ENCODE measurements at regions of chr3 and their contacts with region 1.

Region 1: GRCh38 chr3:113514265-113514769 is 639 bp downstream of the SPICE1 start:
- DNase-seq: no peak
- H3K4me3 Mint-ChIP-seq: no peak overlapping the region
- H3K27ac Mint-ChIP-seq: no peak overlapping the region
- H3K4me1 Mint-ChIP-seq: peaks cover 7% of the 10 kb centered on the region
- H3K27me3 Mint-ChIP-seq: peaks cover 19% of the 10 kb centered on the region

Region 2: DNA sequence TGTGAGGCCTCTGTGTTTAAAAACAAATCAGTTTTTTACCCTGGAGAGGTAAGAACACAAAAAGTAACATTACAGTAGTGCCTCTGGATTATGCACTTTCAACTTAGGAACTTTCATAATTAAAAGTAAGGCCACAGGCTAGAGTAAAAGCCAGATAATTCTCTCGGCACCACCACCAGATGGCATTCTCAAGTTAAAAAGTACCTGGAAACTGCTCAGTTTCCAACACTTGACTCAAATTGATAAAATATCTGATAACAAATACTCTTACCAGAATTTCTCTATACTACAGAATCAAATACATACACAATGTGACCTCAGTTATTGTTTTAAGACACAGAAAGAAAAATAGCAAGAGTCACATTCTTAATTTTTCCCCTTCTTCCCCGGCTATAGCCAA is 19.3 kb before region 1 on chr3:
- intact Hi-C with region 1: no loop called
- DNase-seq: no peak
- H3K4me3 Mint-ChIP-seq: no peak overlapping the region
- H3K27ac Mint-ChIP-seq: no peak overlapping the region
- H3K4me1 Mint-ChIP-seq: no peaks in the 10 kb centered on the region
- H3K27me3 Mint-ChIP-seq: no peaks in the 10 kb centered on the region

Region 3: DNA sequence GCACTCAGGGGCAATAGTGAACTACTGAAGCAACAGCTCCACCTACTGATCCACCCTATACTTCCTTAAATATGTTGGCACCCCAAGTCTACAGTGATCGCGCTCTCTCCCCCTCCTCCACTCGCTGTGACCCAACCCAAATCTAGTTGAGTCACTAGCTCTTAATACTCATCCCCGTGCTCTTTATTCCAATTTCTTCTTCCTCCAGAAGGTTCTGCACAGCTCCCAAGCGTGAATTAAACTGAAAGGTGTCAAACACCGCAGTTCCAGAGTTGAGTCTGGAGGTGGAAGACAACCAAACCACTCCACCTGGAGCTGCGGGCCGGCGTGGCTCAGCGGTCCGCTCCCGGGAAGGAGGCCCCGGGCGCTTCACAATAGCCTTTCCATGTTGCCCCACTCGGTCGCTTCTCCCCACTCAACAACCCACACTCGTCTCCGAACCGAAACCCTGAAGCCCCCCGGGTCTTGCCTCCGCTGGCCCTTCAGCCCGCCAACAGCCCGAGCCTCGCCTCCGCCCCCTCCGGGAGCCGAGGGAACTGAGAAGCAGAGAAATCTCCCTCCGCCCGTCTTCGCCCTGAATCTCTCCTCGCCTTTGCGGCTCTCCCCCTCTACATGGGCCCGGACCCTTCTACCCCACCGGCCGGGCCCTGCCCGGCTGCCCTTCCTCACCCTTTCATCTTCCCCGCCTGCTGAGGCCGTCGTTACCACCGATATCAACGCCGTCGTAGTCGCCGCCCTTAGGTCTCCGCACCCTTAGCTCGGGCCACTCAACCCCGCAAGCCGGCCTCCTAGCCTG is 231.2 kb after region 1 on chr3:
- intact Hi-C with region 1: loop called (anchors 1 kb)
- DNase-seq: peak; percentile 73
- H3K4me3 Mint-ChIP-seq: peak overlapping the region; percentile 96
- H3K27ac Mint-ChIP-seq: peak overlapping the region; percentile 100
- H3K4me1 Mint-ChIP-seq: peaks cover 64% of the 10 kb centered on the region
- H3K27me3 Mint-ChIP-seq: peaks cover 3% of the 10 kb centered on the region

Region 4: DNA sequence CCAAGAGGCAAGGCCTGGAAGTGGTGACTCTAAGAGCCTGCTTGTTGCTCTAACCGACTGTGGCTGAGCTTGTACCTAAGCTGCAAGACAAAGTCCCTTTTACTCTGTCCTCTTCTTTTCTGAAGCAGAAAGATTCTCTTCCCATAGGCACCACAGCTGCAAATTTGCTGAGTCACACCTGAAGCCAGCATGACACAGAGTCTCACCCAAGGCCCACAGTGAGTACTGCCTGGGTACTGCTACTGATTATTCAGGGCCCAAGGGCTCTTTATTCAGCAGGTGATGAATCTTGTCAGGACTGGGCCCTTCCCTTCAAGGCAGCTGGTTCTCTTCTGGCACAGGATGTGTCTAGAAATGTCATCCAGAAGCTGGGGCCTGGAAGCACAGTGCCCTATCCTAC is 760.6 kb after region 1 on chr3:
- intact Hi-C with region 1: no loop called
- DNase-seq: no peak
- H3K4me3 Mint-ChIP-seq: no peak overlapping the region
- H3K27ac Mint-ChIP-seq: no peak overlapping the region
- H3K4me1 Mint-ChIP-seq: peaks cover 8% of the 10 kb centered on the region
- H3K27me3 Mint-ChIP-seq: no peaks in the 10 kb centered on the region